Activated T-helper 2 cell treated with anti-CD3 and anti-CD28 coated beads, Interferon-gamma antibody, Interleukin-2, Interleukin-4, amounts not matched to agents 10 μg/mL and 5 μg/mL and 100 μg/mL, durations not matched to agents 14 hours and 24 hours and 36 hours (primary cell): ENCODE measurements at regions of chr7 and their contacts with region 1.

Region 1: DNA sequence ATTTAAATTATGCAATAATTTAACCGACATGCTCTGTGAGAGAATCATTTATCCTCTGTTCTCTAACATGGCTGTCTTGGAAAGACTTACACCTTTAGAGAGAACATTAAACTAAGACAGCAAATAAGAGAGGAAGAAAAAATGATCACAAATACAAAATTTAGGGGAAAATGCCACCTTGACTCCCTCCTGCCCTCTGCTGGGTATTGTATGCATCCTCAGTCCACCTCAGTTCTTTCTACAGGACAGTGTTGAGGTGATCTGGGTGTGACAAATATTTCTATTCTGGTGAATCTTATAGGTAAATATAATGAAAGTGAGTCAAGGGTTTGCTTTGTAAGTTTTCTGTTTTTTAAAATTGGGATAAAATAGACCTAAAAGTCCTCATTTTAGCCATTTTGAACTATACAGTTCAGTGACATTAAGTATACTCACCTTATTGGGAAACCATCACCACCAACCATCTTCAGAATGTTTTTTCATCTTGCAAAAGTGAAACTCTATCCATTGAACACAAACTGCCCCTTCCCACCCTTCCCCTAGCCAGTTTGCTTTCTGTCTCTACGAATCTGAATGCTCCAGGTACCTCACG is 61.5 kb upstream of the ELMO1 start:
- DNase-seq: no peak
- H3K4me3 Mint-ChIP-seq: no peak overlapping the region
- H3K27ac Mint-ChIP-seq: no peak overlapping the region
- H3K4me1 Mint-ChIP-seq: no peaks in the 10 kb centered on the region
- H3K27me3 Mint-ChIP-seq: peaks cover 36% of the 10 kb centered on the region

Region 2: GRCh38 chr7:37208528-37208927 is 301.6 kb before region 1 on chr7:
- intact Hi-C with region 1: loop called (anchors 5 kb)
- DNase-seq: peak; percentile 19
- H3K4me3 Mint-ChIP-seq: no peak overlapping the region
- H3K27ac Mint-ChIP-seq: peak overlapping the region; percentile 65
- H3K4me1 Mint-ChIP-seq: peaks cover 21% of the 10 kb centered on the region
- H3K27me3 Mint-ChIP-seq: no peaks in the 10 kb centered on the region